Motor neuron (in vitro differentiated cells): ENCODE measurements at regions of chr5 and their contacts with region 1.

Region 1: DNA sequence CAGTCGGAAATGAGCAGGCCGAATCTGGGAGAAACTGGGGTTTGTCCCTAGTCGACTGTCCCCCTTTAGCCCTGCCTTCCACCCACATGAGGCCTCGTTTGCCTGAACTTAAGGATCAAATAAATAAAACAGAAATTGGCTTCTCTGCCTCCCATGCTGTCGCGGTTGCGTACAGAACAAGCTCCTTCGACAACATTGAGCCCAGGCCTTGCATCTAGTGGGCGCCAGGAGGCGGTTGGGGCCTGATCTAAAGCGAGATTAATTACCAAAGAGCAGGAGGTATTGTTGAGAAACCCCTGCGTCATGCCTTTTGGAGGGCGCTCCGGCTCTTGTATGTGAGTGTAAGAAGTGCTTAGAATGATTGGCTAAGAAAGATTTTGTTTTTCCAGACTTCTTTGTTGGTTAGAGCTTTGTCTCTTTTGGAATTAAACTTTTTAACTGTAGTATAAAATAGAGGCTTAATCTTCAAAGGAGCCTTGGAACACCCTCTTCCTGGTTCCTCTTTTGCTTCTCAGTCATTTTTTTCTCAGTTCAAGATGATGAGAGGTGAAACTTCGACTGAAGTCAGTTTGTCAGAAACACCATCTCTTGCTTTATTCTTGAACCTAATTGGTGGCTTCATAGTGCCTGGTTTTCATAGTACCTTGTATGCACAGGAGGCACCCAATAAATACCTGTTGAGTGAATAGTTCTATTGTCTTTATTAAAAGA is 827 bp downstream of the ATP6V0E1 start:
- ATAC-seq: peak; percentile 57 to 74 (median 66)
- H3K4me3 ChIP-seq: peak overlapping the region; percentile 58 to 85 (median 71)
- H3K27ac ChIP-seq: peak overlapping the region; percentile 86 to 92
- H3K4me1 ChIP-seq: peaks cover 6 to 13% of the 10 kb centered on the region in 2 donors

Region 2: DNA sequence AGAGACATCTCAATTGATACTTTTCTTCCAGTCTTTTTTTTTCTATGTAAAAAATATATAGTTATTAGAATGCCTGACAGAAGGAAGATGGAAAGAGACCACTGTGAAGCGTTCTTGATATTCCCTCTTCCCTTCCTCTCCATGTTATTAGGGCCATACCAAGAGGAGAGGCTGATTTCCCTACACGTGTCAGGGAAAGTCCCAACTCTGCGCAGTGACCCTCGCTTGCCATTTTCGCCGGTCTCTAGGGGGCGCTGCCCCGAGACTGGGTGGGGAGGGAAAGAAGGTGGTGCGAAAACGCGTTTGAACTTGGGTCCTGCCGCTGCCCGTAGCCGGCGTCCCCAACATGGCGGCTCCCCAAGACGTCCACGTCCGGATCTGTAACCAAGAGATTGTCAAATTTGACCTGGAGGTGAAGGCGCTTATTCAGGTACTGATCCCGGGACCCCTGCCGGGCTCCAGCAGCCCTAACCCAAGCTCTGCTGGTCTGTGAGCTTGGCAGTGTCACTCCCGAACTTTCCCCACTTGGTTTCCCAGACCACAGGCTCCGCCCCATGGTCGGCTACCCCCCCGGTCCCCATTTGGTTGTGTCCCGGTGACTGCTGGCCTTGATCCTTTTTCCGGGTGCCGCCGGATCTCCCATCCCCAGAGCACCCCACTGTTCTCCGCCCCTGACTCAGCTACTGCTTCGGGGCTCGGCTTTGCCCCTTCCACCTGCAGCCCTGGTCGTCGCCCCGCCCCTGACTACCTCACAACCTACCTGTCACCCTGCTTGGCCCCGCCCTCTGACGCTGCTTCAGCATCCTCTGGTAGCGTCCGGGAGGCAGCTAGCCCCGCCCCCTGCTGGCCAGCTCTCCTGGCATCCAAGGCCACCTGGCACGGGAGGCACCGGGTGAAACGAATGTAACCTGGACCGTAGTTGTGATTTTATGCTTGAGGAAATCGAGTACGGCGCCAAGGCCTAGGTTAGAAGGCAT is 160.1 kb after region 1 on chr5 and contains the start of gene BNIP1:
- in situ Hi-C with region 1: loop called in 2 of 9 experiments (anchors 25 kb)
- ATAC-seq: peak; percentile 82 to 92 (median 90)
- H3K4me3 ChIP-seq: peak within 1 kb of the TSS; percentile 84 to 99 (median 88)
- H3K27ac ChIP-seq: peak within 1 kb of the TSS; percentile 82 to 97
- H3K4me1 ChIP-seq: peaks cover 0 to 4% of the 10 kb centered on the region in 2 donors
- total RNA-seq, gene BNIP1: 9.1 to 23.5 (median 16.4) TPM

Region 3: DNA sequence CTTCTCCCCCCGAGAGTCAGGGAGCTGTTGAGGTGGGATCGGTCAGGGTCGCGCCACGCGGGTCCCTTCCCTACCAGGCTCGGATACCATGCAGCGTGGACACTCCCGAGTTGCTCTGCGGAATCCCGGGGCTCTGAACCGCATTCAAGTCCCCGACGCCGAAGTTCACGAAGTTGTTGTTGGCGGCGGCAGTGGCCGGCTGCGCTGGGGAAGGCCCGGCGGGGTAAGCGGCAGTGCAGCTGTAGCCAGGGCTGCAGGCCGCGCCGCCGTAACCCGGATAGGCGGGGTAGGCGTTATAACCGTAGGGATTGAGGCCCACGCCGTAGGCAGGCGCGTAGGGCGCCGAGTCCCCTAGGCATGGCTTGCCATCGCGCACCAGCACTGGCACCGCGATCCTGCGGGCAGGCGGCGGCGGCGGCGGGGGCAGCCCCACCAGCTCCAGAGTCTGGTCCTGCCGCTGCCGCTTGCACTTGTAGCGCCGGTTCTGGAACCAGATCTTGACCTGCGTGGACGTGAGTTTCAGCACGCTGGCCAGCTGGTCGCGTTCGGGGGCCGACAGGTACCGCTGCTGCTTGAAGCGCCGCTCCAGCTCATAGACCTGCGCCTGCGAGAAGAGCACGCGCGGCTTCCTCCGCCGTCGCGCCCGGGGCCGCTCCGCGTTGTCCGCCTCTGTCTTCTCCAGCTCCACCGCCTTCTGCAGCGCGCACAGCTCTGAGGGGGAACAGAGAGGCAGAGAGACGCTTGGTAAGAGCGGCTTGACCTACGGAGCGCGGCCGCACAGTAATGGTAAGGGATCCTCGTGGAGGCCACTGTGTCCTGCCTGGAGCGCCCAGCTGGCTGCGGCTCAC is 248.3 kb after region 1 on chr5:
- in situ Hi-C with region 1: no loop called
- ATAC-seq: peak in 5 of 8 experiments; percentile 48 to 56 (median 56)
- H3K4me3 ChIP-seq: peak overlapping the region in 3 of 5 donors; percentile 2 to 14 (median 9)
- H3K27ac ChIP-seq: no peak overlapping the region
- H3K4me1 ChIP-seq: peaks cover 0 to 21% of the 10 kb centered on the region in 2 donors

Region 4: GRCh38 chr5:173271419-173271818 is 287.0 kb after region 1 on chr5:
- in situ Hi-C with region 1: loop called in 3 of 9 experiments (anchors 25 kb)
- ATAC-seq: no peak
- H3K4me3 ChIP-seq: no peak overlapping the region
- H3K27ac ChIP-seq: no peak overlapping the region
- H3K4me1 ChIP-seq: no peaks in the 10 kb centered on the region

Region 5: DNA sequence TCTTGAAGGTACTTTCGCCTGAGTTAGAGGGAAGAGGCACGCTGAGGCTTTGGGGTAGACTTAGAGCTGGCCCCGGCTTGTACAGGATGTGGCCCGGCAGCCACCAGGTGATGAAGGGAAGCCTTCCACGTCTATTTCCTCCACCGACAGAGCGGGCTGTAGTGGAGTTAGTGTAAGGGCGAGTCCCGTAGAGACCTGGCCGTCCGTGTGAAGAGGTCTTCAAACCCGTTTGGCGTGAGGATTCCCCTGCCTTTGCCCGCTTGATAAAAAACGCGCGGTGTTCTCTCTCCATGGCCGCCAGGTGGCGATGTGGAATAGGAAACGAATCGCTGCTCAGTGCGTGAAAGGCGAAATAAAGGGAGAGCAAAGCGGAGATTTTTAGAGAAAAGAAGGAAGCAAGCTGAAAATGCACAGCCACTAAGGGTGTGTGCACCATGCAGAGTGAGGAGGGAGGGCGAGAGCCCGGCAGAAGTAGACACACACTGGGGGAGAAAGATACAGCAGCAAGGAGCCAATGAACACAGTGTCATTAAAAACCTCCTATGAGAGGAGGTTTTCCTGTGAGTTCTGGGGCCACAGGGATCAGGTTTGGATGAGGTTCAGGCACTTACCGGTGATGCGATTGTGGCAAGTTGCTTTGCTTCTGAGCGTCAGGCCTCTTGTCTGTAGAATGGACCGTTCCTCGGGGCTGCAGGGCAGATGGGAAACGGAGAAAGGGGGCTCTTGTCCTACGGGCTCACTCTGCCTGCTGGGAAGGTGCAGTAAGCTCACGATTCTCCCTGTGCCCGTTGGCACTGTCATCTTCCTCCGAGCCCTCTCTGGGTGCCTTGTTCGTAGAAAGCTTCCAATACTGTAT is 309.6 kb after region 1 on chr5:
- in situ Hi-C with region 1: loop called in 2 of 9 experiments (anchors 25 kb)
- ATAC-seq: peak; percentile 80 to 97 (median 86)
- H3K4me3 ChIP-seq: no peak overlapping the region
- H3K27ac ChIP-seq: no peak overlapping the region
- H3K4me1 ChIP-seq: peaks cover 30 to 54% of the 10 kb centered on the region in 2 donors